Ascending aorta (tissue), 2 donors: ENCODE measurements at regions of chr15 and their contacts with region 1.

Region 1: DNA sequence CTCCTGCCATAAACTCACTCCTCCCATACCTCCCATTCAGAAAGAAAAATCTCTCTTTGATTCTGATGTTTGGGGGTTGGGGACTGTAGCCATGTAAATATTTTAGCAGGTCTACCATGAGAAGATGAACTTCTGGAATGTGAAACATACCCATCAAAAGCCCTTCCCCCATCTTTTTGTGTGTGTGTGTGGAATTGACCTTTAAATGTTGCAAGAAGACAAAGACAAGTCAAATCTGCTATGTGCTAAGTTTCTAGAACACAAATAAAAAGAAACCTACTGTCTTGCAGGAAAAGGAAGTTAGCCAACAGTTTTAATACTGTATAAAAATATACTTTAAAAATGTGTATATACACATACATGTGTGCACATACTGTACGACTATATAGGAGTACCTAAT is 29.7 kb upstream of the USP50 start:
- DNase-seq: no peak
- H3K4me3 ChIP-seq: no peak overlapping the region
- H3K27ac ChIP-seq: no peak overlapping the region
- H3K4me1 ChIP-seq: no peaks in the 10 kb centered on the region
- H3K27me3 ChIP-seq: no peaks in the 10 kb centered on the region
- CTCF ChIP-seq: no peak

Region 2: DNA sequence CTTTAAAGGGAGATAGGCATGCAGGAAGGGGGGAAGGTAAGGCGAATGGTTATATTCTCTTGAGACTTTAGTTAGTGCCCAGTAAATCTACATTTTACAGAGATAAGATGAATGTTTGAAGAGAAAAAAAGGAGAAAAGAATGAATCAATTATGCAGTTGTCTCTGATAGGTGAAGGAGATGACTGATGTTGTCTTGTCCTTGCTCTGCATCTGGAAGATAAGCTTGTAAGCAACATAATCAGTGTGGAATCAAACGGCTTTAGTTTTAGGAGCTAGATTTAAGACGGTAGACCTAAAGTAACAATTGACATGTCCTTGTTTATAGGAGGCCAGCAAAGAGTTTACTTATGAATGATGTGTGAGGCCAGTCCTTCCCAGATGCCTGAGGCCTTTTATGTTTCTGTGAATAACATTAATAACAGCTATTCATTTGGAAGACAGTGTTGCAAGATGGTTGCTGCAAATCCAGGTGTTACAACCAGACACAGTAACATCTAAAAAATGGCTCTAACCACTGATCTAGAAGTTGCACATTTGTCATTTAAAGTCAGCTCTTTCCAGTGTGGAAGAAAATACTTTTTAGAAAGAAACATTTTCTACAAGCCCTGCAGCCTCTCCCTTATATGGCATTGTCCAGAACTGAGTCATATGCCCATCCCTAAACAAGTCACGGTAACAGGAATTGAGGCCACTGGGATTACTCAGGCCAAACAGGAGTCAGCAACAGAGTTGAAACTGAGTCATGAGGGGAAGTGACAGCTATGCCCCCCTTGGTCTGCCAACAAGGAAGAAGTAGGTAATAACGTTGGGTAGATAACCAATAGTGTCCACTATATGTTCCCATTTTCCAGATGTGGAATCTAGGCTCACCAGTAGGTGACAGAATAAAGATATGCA is 1853.2 kb before region 1 on chr15:
- intact Hi-C with region 1: no loop called
- DNase-seq: no peak
- H3K4me3 ChIP-seq: no peak overlapping the region
- H3K27ac ChIP-seq: no peak overlapping the region
- H3K4me1 ChIP-seq: no peaks in the 10 kb centered on the region
- H3K27me3 ChIP-seq: no peaks in the 10 kb centered on the region
- CTCF ChIP-seq: no peak

Region 3: DNA sequence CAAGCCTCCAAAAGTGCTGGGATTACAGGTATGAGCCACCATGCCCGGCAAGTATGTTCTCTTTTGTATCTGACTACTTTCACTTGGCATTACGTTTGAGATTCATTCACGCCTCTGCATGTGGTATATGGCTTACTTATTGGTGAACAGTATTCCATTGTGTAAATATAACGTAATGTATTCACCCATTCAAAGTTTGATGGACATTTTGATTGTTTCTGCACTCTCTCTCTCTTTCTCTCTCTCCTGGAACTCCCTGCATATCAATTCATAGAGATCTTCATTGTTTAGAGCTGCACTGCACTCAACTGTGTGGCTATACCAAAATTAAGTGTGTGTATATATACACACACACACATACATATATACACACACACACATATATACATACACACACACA is 159.0 kb after region 1 on chr15:
- intact Hi-C with region 1: loop called (anchors 10 kb)
- DNase-seq: no peak
- H3K4me3 ChIP-seq: no peak overlapping the region
- H3K27ac ChIP-seq: no peak overlapping the region
- H3K4me1 ChIP-seq: no peaks in the 10 kb centered on the region
- H3K27me3 ChIP-seq: no peaks in the 10 kb centered on the region
- CTCF ChIP-seq: no peak